Heart right ventricle (tissue), 16 donors: ENCODE measurements at regions of chr13 and their contacts with region 1.

Region 1: DNA sequence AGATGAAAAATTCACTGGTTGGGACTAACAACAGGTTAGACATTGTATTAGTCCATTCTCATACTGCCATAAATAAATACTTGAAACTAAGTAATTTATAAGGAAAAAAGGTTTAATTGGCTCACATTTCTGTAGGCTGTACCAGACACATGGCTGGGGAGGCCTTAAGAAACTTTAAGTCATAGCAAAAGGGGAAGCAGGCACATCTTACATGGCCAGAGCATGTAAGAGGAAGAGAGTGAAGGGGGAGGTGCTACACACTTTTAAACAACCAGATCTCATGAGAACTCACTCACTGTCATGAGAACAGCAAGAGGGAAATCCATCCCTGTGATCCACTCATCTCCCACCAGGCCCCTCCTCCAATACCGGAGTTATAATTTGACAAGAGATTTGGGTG is 125.9 kb downstream of the SUCLA2 start:
- DNase-seq: no peak
- ATAC-seq: no peak
- H3K4me3 ChIP-seq: no peak overlapping the region
- H3K27ac ChIP-seq: no peak overlapping the region
- H3K4me1 ChIP-seq: no peaks in the 10 kb centered on the region
- H3K27me3 ChIP-seq: no peaks in the 10 kb centered on the region
- CTCF ChIP-seq: no peak

Region 2: GRCh38 chr13:47908197-47908902 is 33.1 kb after region 1 on chr13:
- intact Hi-C with region 1: loop called in 1 of 10 experiments (anchors 1 kb)
- DNase-seq: no peak
- ATAC-seq: peak in 1 of 8 donors; percentile 27
- H3K4me3 ChIP-seq: no peak overlapping the region
- H3K27ac ChIP-seq: no peak overlapping the region
- H3K4me1 ChIP-seq: peaks cover 0 to 4% (median 0%) of the 10 kb centered on the region in 9 donors
- H3K27me3 ChIP-seq: no peaks in the 10 kb centered on the region
- CTCF ChIP-seq: no peak